ENCODE measurements at regions of chr1 and their contacts with region 1.

Region 1: DNA sequence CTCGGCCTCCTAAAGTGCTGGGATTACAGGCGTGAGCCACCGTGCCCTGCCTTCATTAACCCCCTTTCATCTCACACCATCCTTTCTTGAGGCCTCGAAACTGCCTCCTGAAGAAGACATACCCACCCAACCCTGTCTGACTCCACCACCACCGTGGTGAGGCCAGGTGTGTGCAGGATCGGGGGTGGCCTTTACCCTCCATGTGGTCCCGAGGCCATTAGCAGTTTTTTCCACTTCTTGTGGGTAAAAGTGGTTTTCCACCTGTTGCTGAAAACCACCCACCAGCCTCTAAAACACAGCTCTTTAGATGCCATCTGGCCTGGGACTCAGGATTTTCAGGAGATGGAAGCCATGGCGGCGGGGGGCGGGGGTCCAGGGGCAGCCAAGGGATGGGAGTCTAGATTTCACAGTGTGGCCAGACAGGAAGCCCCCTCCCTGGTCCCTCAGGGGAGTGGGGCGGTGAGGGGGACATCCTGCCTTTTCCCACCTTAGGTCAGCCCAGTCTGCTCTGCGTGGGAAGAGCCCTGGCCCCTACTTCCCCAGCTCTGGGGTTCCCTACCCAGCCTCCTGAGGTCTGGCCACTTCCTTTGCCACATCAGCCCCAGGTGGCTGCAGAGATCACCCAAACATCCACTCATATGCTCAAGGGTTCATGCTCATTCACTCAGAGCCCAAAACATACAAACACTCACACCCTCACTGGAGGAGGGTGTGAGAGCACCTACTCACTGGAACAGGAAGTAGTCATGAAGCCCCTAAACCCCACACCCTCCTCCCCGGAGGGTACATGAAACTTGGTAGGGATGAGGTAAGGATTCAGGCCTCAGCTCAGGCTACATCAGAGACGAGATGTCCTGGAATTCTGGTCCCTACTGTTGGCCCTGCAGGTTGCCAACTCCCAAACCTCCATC is 2.3 kb downstream of the FGR start:
- DNase-seq: peak; percentile 30
- H3K4me3 Mint-ChIP-seq: peak overlapping the region; percentile 55
- H3K27ac Mint-ChIP-seq: peak overlapping the region; percentile 71
- H3K4me1 Mint-ChIP-seq: peaks cover 59% of the 10 kb centered on the region
- H3K27me3 Mint-ChIP-seq: no peaks in the 10 kb centered on the region

Region 2: DNA sequence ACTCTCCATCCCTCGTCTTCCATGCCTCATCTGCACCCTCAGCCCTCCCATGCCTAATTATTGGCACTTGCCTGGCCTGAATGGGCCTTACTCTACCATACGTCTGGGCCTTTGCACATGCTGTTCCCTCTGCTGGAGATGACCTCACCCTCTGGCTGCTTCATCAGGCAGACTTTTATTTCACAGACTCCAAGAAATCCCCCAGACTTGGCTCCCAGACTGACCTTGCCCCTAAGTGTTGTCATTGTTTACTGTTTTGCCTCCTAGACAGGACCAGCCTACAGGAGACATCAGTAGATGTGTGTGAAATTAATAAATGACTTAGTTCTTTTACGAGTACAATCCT is 23.5 kb before region 1 on chr1:
- intact Hi-C with region 1: loop called (anchors 2 kb)
- DNase-seq: no peak
- H3K4me3 Mint-ChIP-seq: no peak overlapping the region
- H3K27ac Mint-ChIP-seq: no peak overlapping the region
- H3K4me1 Mint-ChIP-seq: peaks cover 23% of the 10 kb centered on the region
- H3K27me3 Mint-ChIP-seq: peaks cover 4% of the 10 kb centered on the region